Mammary epithelial cell (primary cell): ENCODE measurements at regions of chr11 and their contacts with region 1.

Region 1: GRCh38 chr11:86740709-86741483 is 59.4 kb upstream of the PRSS23 start:
- DNase-seq: peak; percentile 88
- H3K4me3 ChIP-seq: no peak overlapping the region
- H3K27ac ChIP-seq: peak overlapping the region; percentile 85
- H3K4me1 ChIP-seq: peaks cover 65% of the 10 kb centered on the region
- H3K27me3 ChIP-seq: no peaks in the 10 kb centered on the region
- CTCF ChIP-seq: no peak

Region 2: GRCh38 chr11:86608251-86608799 is 132.6 kb before region 1 on chr11:
- CTCF ChIA-PET with region 1: no interaction called
- dilution Hi-C with region 1: no loop called
- in situ Hi-C with region 1: no loop called
- intact Hi-C with region 1: loop called (anchors 5 kb)
- DNase-seq: peak; percentile 72
- H3K4me3 ChIP-seq: no peak overlapping the region
- H3K27ac ChIP-seq: no peak overlapping the region
- H3K4me1 ChIP-seq: peaks cover 22% of the 10 kb centered on the region
- H3K27me3 ChIP-seq: no peaks in the 10 kb centered on the region
- CTCF ChIP-seq: peak; percentile 89 to 91

Region 3: DNA sequence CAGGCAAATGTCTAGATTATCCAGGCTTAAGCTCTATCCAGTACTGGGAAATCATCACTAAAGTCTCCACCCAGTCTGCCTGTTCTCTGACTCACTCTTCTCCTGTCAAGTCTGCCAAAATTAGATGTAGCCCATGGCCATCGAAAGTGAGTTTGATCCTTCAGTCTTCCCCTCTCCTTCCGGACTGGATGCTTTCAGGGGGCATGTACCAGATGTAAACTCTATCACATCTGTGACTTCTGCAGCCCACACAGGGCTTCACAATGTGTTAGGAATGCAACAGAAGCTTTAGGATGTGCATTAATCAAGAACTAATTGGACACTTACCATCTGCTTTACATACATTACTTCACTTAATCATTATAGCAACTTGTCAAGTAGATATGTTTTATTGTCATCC is 80.8 kb before region 1 on chr11:
- CTCF ChIA-PET with region 1: no interaction called
- dilution Hi-C with region 1: no loop called
- in situ Hi-C with region 1: no loop called
- intact Hi-C with region 1: no loop called
- DNase-seq: peak; percentile 33
- H3K4me3 ChIP-seq: no peak overlapping the region
- H3K27ac ChIP-seq: no peak overlapping the region
- H3K4me1 ChIP-seq: peaks cover 14% of the 10 kb centered on the region
- H3K27me3 ChIP-seq: no peaks in the 10 kb centered on the region
- CTCF ChIP-seq: no peak

Region 4: DNA sequence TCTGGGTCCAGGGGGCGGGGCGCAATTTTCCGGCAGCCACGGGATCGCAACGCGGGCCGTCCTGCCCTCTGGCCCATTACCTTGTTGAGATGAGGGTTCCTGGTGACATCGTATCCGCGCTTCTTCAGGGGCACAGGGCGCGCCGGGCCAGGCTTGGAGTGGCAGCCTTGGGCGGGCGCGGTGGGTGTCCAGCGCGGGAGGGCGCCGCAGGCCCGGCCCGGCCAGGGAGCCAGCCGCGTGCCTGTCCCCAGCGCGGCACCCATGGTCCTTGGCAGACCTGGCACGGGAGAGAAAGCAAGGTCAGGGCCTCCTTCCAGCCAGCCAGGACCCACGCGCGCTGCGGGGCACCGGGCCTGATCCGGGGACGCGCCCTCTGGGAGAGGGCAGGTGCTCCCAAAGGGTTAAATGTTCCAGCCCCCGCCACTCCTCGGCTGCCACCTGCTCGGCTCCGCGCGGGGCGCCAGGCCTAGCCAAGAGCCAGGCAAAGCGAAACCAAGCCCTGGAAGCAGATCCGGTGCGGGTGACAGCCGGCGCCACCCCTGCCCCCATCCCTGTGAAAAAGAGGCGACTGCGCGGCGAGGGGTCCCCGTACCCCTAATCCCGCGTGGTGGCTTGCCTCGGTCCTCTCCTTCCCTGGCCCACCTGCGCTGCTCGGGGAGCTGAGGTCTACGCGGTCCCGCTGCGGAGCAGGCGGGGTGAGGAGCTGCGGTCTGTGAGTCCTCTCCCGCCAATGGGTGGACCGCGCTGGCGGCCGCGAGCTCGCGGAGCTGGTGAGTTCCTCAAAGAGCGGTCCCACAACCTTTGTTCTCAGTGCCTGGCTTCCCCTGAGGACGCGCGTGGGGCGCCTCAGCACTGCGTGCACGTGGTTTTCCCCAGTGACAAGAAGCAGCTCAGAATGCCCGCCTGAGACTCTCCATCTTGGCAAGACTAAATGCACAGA is 68.9 kb before region 1 on chr11 and contains the start of gene ME3:
- CTCF ChIA-PET with region 1: no interaction called
- dilution Hi-C with region 1: no loop called
- in situ Hi-C with region 1: no loop called
- intact Hi-C with region 1: loop called (anchors 5 kb)
- DNase-seq: no peak
- H3K4me3 ChIP-seq: peak within 1 kb of the TSS; percentile 28 to 56 (median 52)
- H3K27ac ChIP-seq: peak within 1 kb of the TSS; percentile 14
- H3K4me1 ChIP-seq: peaks cover 28% of the 10 kb centered on the region
- H3K27me3 ChIP-seq: no peaks in the 10 kb centered on the region
- CTCF ChIP-seq: no peak
- total RNA-seq, gene ME3: 11.2 TPM in 1 of 2 donors, not detected in the other

Region 5: GRCh38 chr11:86726118-86726748 is 14.7 kb before region 1 on chr11:
- CTCF ChIA-PET with region 1: no interaction called
- dilution Hi-C with region 1: no loop called
- in situ Hi-C with region 1: no loop called
- intact Hi-C with region 1: loop called (anchors 1 kb)
- DNase-seq: peak; percentile 95
- H3K4me3 ChIP-seq: no peak overlapping the region
- H3K27ac ChIP-seq: peak overlapping the region; percentile 66
- H3K4me1 ChIP-seq: peaks cover 42% of the 10 kb centered on the region
- H3K27me3 ChIP-seq: no peaks in the 10 kb centered on the region
- CTCF ChIP-seq: no peak

Region 6: GRCh38 chr11:86802601-86803051 is 61.7 kb after region 1 on chr11:
- CTCF ChIA-PET with region 1: interaction called, 3 read pairs
- dilution Hi-C with region 1: no loop called
- in situ Hi-C with region 1: no loop called
- intact Hi-C with region 1: loop called (anchors 1 kb)
- DNase-seq: peak; percentile 78
- H3K4me3 ChIP-seq: peak overlapping the region; percentile 64 to 84 (median 71)
- H3K27ac ChIP-seq: peak overlapping the region; percentile 75
- H3K4me1 ChIP-seq: peaks cover 48% of the 10 kb centered on the region
- H3K27me3 ChIP-seq: no peaks in the 10 kb centered on the region
- CTCF ChIP-seq: peak; percentile 54 to 59